ENCODE measurements at regions of chr15 and their contacts with region 1.

Region 1: DNA sequence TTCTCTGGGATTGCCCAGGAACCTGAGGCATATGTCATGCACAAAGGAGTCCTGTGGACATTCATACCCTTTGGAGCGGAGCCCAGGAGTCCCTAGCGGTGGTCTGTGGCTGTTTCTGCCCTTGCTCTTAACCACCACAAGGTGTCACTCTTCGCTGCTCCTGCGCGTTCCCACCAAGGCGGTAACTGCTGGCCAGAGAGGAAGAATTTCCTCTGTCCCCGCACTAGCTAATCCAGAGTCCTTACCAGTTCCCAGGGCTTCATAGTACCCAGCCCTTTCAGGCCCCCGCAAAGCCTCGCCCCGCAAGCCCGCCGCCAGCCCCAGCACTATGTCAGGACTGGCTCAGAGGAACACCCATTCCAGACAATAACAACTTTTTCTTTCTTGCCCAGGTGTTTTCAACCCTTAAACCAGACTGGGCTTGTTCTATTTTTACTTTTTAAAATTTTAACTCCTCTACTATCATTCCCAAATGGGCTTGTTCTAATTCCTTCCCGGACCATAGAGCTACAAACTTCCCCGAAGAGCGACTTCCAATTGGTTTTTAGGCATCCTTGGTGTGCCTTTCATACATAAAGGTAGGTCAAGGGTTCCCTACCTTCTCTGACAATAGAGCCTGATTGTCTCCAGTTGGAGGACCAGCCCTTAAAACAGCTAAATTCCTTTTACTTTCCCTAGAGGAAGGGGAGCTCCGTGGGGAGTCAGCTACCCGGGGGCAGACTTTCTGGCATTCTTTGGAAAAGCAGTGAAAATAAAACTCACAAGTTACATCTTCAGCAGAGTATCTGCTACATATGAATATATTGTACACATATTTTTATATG is 31.8 kb upstream of the ZNF774 start:
- DNase-seq: peak; percentile 83
- ATAC-seq: peak; percentile 99
- H3K4me3 Mint-ChIP-seq: no peak overlapping the region
- H3K27ac Mint-ChIP-seq: no peak overlapping the region
- H3K4me1 Mint-ChIP-seq: peaks cover 6% of the 10 kb centered on the region
- H3K27me3 Mint-ChIP-seq: no peaks in the 10 kb centered on the region

Region 2: DNA sequence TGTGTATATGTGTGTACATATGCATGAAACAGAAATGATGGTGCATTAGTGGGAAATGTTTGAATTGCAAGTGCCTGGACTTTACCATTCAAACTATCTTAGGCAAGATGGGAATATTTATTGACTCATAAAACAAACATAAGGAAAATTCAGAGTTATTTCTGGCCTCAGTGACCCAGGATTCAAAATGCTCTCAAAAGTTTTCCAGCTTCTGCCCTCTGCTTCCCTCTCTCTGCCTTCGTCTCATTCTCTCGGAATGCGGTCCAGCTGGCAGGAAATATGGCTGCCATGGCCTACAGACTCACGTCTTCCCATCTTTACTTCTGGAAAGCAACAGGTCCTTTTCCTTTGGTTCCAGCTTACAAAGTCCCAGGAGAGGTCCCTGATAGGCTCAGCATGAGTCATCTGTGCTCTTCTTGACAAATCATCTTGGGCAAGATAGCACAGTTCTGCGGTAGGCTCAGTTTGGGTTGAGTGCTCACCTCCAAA is 23.1 kb after region 1 on chr15:
- CTCF ChIA-PET with region 1: interaction called, 13 read pairs
- POLR2A ChIA-PET with region 1: no interaction called
- intact Hi-C with region 1: no loop called
- DNase-seq: no peak
- ATAC-seq: peak; percentile 39
- H3K4me3 Mint-ChIP-seq: no peak overlapping the region
- H3K27ac Mint-ChIP-seq: no peak overlapping the region
- H3K4me1 Mint-ChIP-seq: peaks cover 12% of the 10 kb centered on the region
- H3K27me3 Mint-ChIP-seq: no peaks in the 10 kb centered on the region

Region 3: GRCh38 chr15:90463381-90463780 is 143.1 kb after region 1 on chr15:
- CTCF ChIA-PET with region 1: interaction called, 16 read pairs
- POLR2A ChIA-PET with region 1: interaction called, 8 read pairs
- intact Hi-C with region 1: no loop called
- DNase-seq: no peak
- ATAC-seq: no peak
- H3K4me3 Mint-ChIP-seq: no peak overlapping the region
- H3K27ac Mint-ChIP-seq: no peak overlapping the region
- H3K4me1 Mint-ChIP-seq: peaks cover 21% of the 10 kb centered on the region
- H3K27me3 Mint-ChIP-seq: no peaks in the 10 kb centered on the region

Region 4: GRCh38 chr15:90603893-90604292 is 283.6 kb after region 1 on chr15:
- CTCF ChIA-PET with region 1: interaction called, 3 read pairs
- POLR2A ChIA-PET with region 1: no interaction called
- intact Hi-C with region 1: loop called in 1 of 2 experiments (anchors 1 kb)
- DNase-seq: peak; percentile 75
- ATAC-seq: peak; percentile 70
- H3K4me3 Mint-ChIP-seq: no peak overlapping the region
- H3K27ac Mint-ChIP-seq: peak overlapping the region; percentile 2
- H3K4me1 Mint-ChIP-seq: peaks cover 26% of the 10 kb centered on the region
- H3K27me3 Mint-ChIP-seq: no peaks in the 10 kb centered on the region

Region 5: DNA sequence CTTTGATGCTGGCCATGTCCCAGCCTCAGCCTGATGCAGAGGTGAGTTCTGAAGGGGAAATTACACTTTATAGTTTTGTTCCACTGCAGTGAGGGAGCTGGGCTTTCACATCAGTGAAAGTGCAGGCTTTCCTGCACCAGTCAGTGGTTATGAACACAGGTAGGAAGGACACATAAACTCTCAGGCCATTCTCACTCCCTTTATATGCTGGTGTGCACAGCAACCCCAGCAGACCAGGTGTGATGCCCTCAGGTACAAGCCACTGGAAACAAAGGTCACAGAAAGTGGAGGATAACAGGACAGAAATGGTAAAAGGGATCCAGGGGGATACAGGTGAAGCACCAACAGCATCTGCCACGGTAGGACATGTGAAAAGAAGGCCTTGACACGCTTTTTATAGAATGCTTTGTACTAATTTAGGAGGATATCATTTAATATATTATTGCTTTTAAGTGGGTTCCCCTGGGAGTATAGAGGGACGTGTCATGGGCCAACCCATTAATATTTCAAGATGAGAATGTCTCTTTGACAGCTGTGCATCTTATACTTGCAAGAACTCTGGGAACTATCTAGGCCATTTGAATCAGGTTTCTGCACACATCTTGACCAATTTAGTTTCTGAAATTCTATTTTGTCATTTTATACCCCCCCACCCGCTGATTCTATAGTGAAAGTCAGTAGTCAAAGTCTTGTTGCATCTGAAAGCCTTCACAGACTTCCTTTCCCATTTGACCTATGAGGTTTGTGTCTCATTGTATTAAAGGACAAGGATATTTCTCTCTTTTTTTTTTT is 371.9 kb after region 1 on chr15:
- CTCF ChIA-PET with region 1: interaction called, 4 read pairs
- POLR2A ChIA-PET with region 1: no interaction called
- intact Hi-C with region 1: loop called in 1 of 2 experiments (anchors 1 kb)
- DNase-seq: no peak
- ATAC-seq: no peak
- H3K4me3 Mint-ChIP-seq: no peak overlapping the region
- H3K27ac Mint-ChIP-seq: no peak overlapping the region
- H3K4me1 Mint-ChIP-seq: peaks cover 13% of the 10 kb centered on the region
- H3K27me3 Mint-ChIP-seq: no peaks in the 10 kb centered on the region

Region 6: DNA sequence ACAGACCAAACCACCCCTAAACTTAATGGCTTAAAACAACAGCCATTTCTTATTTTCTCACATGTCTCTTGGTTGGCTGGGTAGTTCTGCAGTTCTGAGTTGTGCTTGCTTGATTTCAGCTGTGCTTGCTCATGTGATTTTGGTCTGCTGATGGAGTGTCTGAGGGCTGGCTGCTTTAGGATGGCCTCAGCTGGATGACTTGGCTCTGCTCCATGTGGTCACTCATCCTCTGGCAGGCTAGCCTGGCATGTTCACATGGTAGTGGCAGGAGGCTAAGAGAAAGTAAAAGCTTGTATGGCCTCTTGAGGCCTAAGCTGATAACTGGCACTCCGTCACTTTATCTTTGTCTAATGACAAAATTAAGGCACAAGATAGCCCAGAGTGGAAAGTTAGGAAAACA is 783.8 kb after region 1 on chr15:
- CTCF ChIA-PET with region 1: no interaction called
- POLR2A ChIA-PET with region 1: no interaction called
- intact Hi-C with region 1: no loop called
- DNase-seq: no peak
- ATAC-seq: no peak
- H3K4me3 Mint-ChIP-seq: no peak overlapping the region
- H3K27ac Mint-ChIP-seq: no peak overlapping the region
- H3K4me1 Mint-ChIP-seq: peaks cover 14% of the 10 kb centered on the region
- H3K27me3 Mint-ChIP-seq: peaks cover 64% of the 10 kb centered on the region